Activated T-helper 1 cell treated with anti-CD3 and anti-CD28 coated beads, Interleukin-12 subunit alpha, Interleukin-12 subunit beta, Interleukin-2, Interleukin-4 antibody, amounts not matched to agents 30 ng/mL and 10 ng/mL and 1 ng/mL, durations not matched to agents 14 hours and 24 hours and 36 hours (primary cell): ENCODE measurements at regions of chr2 and their contacts with region 1.

Region 1: GRCh38 chr2:73985308-73986084 is 786 bp downstream of the TET3 start:
- DNase-seq: no peak
- H3K4me3 Mint-ChIP-seq: peak overlapping the region; percentile 81
- H3K27ac Mint-ChIP-seq: peak overlapping the region; percentile 91
- H3K4me1 Mint-ChIP-seq: peaks cover 81% of the 10 kb centered on the region
- H3K27me3 Mint-ChIP-seq: peaks cover 29% of the 10 kb centered on the region

Region 2: GRCh38 chr2:73314441-73314840 is 671.1 kb before region 1 on chr2:
- intact Hi-C with region 1: no loop called
- DNase-seq: no peak
- H3K4me3 Mint-ChIP-seq: no peak overlapping the region
- H3K27ac Mint-ChIP-seq: no peak overlapping the region
- H3K4me1 Mint-ChIP-seq: no peaks in the 10 kb centered on the region
- H3K27me3 Mint-ChIP-seq: peaks cover 4% of the 10 kb centered on the region

Region 3: DNA sequence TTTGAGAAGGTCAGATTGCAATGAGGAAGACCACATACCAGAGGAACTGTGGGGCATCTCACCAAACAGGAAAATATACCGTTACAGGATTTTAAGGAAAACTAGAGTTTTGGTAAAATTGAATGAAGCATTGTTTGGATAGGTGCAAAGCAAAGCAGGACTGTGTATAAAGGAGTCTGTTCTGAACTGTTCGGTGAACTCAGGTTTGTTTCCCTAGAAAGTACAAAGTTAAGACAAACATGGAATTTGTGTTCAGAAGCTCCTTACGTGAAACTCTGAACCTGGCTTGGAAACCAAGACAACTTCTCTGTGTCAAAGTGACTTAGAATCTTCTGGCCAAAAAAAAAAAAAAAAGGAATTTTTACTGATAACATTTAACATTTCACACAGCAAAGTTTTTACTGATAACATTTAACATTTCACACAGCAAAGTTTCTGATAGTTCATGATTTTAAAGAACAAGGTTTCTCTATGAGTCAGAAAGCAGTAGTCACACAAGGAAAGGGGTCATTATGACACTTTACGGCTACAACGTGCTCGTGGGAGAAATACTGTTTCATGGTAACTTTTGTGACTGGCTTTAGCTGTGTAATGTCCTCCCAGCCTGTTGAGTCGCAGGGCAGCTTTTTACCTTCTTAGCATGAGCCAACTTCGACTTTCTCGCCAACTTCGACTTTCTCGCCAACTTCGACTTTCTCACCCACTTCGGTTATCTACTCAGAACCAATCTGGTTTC is 21.9 kb before region 1 on chr2:
- intact Hi-C with region 1: loop called (anchors 1 kb)
- DNase-seq: no peak
- H3K4me3 Mint-ChIP-seq: peak overlapping the region; percentile 1
- H3K27ac Mint-ChIP-seq: peak overlapping the region; percentile 86
- H3K4me1 Mint-ChIP-seq: peaks cover 30% of the 10 kb centered on the region
- H3K27me3 Mint-ChIP-seq: no peaks in the 10 kb centered on the region

Region 4: GRCh38 chr2:74002487-74003391 is 17.2 kb after region 1 on chr2:
- intact Hi-C with region 1: loop called (anchors 1 kb)
- DNase-seq: peak; percentile 81
- H3K4me3 Mint-ChIP-seq: peak overlapping the region; percentile 89
- H3K27ac Mint-ChIP-seq: peak overlapping the region; percentile 66
- H3K4me1 Mint-ChIP-seq: peaks cover 69% of the 10 kb centered on the region
- H3K27me3 Mint-ChIP-seq: peaks cover 2% of the 10 kb centered on the region

Region 5: GRCh38 chr2:74119912-74120825 is 134.7 kb after region 1 on chr2:
- intact Hi-C with region 1: loop called (anchors 5 kb)
- DNase-seq: peak; percentile 82
- H3K4me3 Mint-ChIP-seq: peak overlapping the region; percentile 82
- H3K27ac Mint-ChIP-seq: peak overlapping the region; percentile 88
- H3K4me1 Mint-ChIP-seq: peaks cover 7% of the 10 kb centered on the region
- H3K27me3 Mint-ChIP-seq: peaks cover 12% of the 10 kb centered on the region

Region 6: GRCh38 chr2:74286725-74287124 is 301.2 kb after region 1 on chr2:
- intact Hi-C with region 1: no loop called
- DNase-seq: no peak
- H3K4me3 Mint-ChIP-seq: no peak overlapping the region
- H3K27ac Mint-ChIP-seq: no peak overlapping the region
- H3K4me1 Mint-ChIP-seq: peaks cover 13% of the 10 kb centered on the region
- H3K27me3 Mint-ChIP-seq: no peaks in the 10 kb centered on the region

Region 7: GRCh38 chr2:74768401-74768914 is 783.0 kb after region 1 on chr2:
- intact Hi-C with region 1: no loop called
- DNase-seq: no peak
- H3K4me3 Mint-ChIP-seq: no peak overlapping the region
- H3K27ac Mint-ChIP-seq: no peak overlapping the region
- H3K4me1 Mint-ChIP-seq: peaks cover 13% of the 10 kb centered on the region
- H3K27me3 Mint-ChIP-seq: peaks cover 11% of the 10 kb centered on the region

Region 8: GRCh38 chr2:75087736-75088135 is 1102.2 kb after region 1 on chr2:
- intact Hi-C with region 1: no loop called
- DNase-seq: no peak
- H3K4me3 Mint-ChIP-seq: no peak overlapping the region
- H3K27ac Mint-ChIP-seq: no peak overlapping the region
- H3K4me1 Mint-ChIP-seq: no peaks in the 10 kb centered on the region
- H3K27me3 Mint-ChIP-seq: peaks cover 2% of the 10 kb centered on the region